Activated naive CD4-positive, alpha-beta T cell treated with anti-CD3 and anti-CD28 coated beads, Interleukin-2, amount 10 ng/mL, durations not matched to agents 7 days and 5 days (primary cell): ENCODE measurements at regions of chr19 and their contacts with region 1.

Region 1: DNA sequence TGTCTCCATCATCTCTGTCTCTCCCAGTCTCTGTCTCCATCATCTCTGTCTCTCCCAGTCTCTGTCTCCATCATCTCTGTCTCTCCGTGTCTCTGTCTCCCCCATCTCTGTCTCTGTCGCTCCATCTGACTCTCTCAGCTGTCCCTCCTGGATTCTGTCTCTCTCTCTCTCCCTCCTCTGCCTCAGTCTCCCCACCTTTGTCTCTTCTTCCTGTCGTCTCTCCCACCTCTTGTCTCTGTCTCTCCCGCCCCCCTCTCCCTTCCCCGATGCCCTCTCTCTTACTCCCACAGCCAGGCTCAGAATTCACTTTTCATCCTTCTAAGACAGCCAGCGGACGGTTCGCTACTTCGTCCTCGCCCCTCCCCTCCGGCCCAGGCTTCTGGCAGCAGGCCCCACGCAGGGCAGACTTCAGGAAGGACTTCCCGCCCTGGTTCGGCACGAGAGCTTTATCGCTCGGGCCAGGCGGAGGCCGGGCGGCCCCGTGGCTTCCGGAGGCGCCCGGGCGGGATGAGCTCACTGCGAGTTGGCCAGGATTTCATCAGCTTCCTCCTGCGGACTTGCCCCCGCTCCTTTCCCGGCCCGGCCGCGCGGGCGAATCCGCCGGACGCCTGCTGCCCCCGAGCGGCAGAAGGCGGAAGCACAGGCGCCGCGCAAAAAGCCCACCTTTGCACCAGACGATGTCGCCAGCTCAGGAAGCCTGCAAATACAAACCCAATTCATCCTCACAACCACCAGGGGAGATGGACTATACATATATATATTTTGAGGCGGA is 12.4 kb upstream of the CCDC9 start:
- DNase-seq: peak; percentile 92
- H3K4me3 Mint-ChIP-seq: peak overlapping the region; percentile 63
- H3K27ac Mint-ChIP-seq: peak overlapping the region; percentile 89
- H3K4me1 Mint-ChIP-seq: peaks cover 40% of the 10 kb centered on the region
- H3K27me3 Mint-ChIP-seq: peaks cover 22% of the 10 kb centered on the region

Region 2: GRCh38 chr19:47130591-47131227 is 113.3 kb before region 1 on chr19 and contains the start of gene SAE1:
- CTCF ChIA-PET with region 1: interaction called, 17 read pairs
- DNase-seq: peak; percentile 92
- H3K4me3 Mint-ChIP-seq: peak within 1 kb of the TSS; percentile 98
- H3K27ac Mint-ChIP-seq: peak within 1 kb of the TSS; percentile 95
- H3K4me1 Mint-ChIP-seq: peaks cover 53% of the 10 kb centered on the region
- H3K27me3 Mint-ChIP-seq: peaks cover 7% of the 10 kb centered on the region

Region 3: GRCh38 chr19:47152224-47153017 is 91.5 kb before region 1 on chr19:
- CTCF ChIA-PET with region 1: interaction called, 85 read pairs
- DNase-seq: no peak
- H3K4me3 Mint-ChIP-seq: no peak overlapping the region
- H3K27ac Mint-ChIP-seq: no peak overlapping the region
- H3K4me1 Mint-ChIP-seq: peaks cover 47% of the 10 kb centered on the region
- H3K27me3 Mint-ChIP-seq: no peaks in the 10 kb centered on the region

Region 4: DNA sequence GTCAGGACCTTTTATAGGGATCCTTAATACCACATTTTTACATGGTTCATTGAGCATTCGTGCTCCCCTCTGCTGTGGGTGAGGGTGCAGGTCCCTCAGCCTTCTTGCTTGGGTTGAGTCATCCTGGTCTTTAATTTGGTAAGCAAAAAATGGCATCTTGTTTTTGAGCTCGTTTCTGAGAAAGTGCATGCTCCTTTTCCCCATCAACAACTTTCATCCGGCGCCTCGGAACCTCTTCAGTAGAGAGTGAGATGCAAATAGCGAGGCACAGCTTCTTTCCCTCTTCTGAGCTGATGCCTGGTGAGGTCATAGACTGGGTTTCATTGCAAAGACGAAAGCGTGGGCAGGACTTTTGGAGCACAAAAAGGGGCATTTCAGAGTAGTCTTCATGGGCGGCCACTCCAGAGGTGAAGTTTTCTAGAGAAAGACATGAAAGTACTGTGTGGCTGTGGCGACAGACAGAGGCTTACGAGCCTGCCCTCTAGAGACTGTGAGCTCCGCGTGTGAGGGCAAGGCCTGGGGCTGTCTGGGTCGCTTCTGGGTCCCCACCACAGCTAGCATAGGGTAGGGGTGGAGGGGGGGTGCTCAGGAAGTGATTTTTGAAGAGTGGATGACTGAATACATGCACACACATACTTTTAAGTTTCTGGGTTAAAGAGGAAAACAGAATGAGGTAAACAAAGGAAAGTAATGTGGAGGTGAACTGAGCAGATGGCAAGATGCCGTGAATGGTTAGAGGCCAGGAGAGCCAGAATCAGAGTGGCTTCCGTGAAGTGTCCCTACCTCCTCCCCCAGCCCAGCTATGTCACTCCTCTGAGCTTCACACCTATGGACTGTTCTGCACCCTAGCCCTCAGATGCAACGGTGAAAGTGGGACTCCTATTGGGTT is 57.3 kb before region 1 on chr19:
- CTCF ChIA-PET with region 1: interaction called, 13 read pairs
- DNase-seq: peak; percentile 84
- H3K4me3 Mint-ChIP-seq: peak overlapping the region; percentile 40
- H3K27ac Mint-ChIP-seq: peak overlapping the region; percentile 98
- H3K4me1 Mint-ChIP-seq: peaks cover 86% of the 10 kb centered on the region
- H3K27me3 Mint-ChIP-seq: no peaks in the 10 kb centered on the region

Region 5: GRCh38 chr19:47225746-47226425 is 18.1 kb before region 1 on chr19:
- CTCF ChIA-PET with region 1: interaction called, 25 read pairs
- DNase-seq: peak; percentile 87
- H3K4me3 Mint-ChIP-seq: peak overlapping the region; percentile 74
- H3K27ac Mint-ChIP-seq: peak overlapping the region; percentile 85
- H3K4me1 Mint-ChIP-seq: peaks cover 20% of the 10 kb centered on the region
- H3K27me3 Mint-ChIP-seq: peaks cover 8% of the 10 kb centered on the region

Region 6: GRCh38 chr19:47256688-47257443 is 12.9 kb after region 1 on chr19:
- CTCF ChIA-PET with region 1: interaction called, 31 read pairs
- DNase-seq: peak; percentile 100
- H3K4me3 Mint-ChIP-seq: peak overlapping the region; percentile 95
- H3K27ac Mint-ChIP-seq: peak overlapping the region; percentile 96
- H3K4me1 Mint-ChIP-seq: peaks cover 40% of the 10 kb centered on the region
- H3K27me3 Mint-ChIP-seq: peaks cover 7% of the 10 kb centered on the region

Region 7: GRCh38 chr19:47280183-47280797 is 36.3 kb after region 1 on chr19:
- CTCF ChIA-PET with region 1: no interaction called
- DNase-seq: peak; percentile 78
- H3K4me3 Mint-ChIP-seq: no peak overlapping the region
- H3K27ac Mint-ChIP-seq: no peak overlapping the region
- H3K4me1 Mint-ChIP-seq: peaks cover 14% of the 10 kb centered on the region
- H3K27me3 Mint-ChIP-seq: no peaks in the 10 kb centered on the region